ENCODE measurements at regions of chr20 and their contacts with region 1.

Region 1: GRCh38 chr20:63537525-63538203 is 488 bp upstream of the PTK6 start:
- DNase-seq: peak; percentile 88 to 94 (median 93)
- ATAC-seq: peak; percentile 86 to 90
- H3K4me3 ChIP-seq: no peak overlapping the region
- H3K27ac ChIP-seq: no peak overlapping the region
- H3K4me1 ChIP-seq: no peaks in the 10 kb centered on the region
- H3K27me3 ChIP-seq: no peaks in the 10 kb centered on the region

Region 2: GRCh38 chr20:63096151-63096589 is 441.5 kb before region 1 on chr20:
- intact Hi-C with region 1: no loop called
- DNase-seq: peak in 2 of 3 donors; percentile 4 to 12
- ATAC-seq: no peak
- H3K4me3 ChIP-seq: no peak overlapping the region
- H3K27ac ChIP-seq: no peak overlapping the region
- H3K4me1 ChIP-seq: no peaks in the 10 kb centered on the region
- H3K27me3 ChIP-seq: no peaks in the 10 kb centered on the region

Region 3: DNA sequence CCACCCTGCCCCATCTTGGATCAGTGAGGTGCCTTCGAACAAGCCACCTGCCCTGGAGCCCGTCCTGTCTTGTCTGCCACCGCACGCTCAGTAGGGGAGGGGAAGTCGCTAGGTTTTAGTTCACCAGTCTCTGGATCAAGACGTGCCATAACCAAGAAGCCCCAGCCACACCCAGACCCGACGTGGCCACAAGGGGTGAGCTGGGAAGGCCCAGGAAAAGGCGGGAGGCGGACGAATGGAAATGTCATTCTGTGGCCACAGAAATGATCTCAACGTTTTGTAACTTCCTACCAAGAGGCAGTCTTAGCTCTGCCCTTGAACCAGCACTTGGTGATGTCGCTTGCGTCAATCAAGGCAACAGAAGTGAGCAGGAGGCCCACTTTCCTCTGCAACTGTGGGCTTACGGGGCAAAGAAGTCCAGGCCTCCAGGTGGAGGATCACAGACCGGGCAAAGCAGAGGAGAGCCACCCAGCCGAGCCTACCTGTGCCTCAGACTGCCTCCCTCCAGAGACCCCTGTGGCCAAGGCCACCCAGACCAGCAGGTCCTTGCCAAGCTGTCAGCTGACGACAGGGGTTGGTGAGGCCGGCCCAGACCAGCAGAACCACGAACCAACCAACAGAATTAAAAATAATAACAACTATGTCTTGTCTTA is 74.7 kb after region 1 on chr20:
- intact Hi-C with region 1: loop called in 1 of 4 experiments (anchors 2 kb)
- DNase-seq: no peak
- ATAC-seq: peak; percentile 36 to 55
- H3K4me3 ChIP-seq: no peak overlapping the region
- H3K27ac ChIP-seq: no peak overlapping the region
- H3K4me1 ChIP-seq: no peaks in the 10 kb centered on the region
- H3K27me3 ChIP-seq: no peaks in the 10 kb centered on the region

Region 4: DNA sequence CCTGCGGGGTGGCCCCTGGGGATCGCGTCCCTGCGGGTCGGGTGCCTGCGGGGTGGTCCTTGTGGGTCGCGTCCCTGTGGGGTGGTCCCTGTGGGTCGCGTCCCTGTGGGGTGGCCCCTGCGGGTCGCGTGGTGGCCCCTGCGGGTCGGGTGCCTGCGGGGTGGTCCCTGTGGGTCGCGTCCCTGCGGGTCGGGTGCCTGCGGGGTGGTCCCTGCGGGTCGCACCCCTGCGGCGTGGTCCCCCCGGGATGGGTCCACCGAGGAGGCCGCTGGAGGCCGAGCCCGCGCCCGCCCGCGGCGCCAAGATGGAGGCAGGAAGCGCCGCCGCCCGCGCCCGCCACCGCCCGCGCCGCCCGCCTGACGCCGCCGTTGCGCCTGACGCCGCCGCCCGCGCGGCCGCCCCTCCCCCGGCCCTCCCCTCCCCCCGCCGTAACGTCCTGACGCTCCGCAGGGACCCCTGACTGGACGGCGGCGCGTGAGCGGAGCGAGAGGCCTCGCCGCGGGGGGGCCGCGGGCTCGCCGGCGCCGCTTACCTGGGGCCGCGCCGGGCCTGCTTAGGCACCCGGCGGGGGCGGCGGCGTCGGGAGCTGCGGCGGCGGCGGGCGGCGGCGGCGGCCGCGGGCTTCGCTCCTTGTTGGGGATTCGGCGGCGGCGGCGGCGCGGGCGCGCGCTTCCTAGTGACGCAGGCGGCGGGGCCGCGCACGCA is 88.9 kb after region 1 on chr20 and contains the start of gene GMEB2:
- intact Hi-C with region 1: no loop called
- DNase-seq: peak; percentile 80 to 93 (median 91)
- ATAC-seq: peak; percentile 24 to 44
- H3K4me3 ChIP-seq: peak within 1 kb of the TSS; percentile 49
- H3K27ac ChIP-seq: peak within 1 kb of the TSS; percentile 87
- H3K4me1 ChIP-seq: no peaks in the 10 kb centered on the region
- H3K27me3 ChIP-seq: no peaks in the 10 kb centered on the region
- total RNA-seq, gene GMEB2: 7.0 to 7.7 (median 7.3) TPM

Region 5: GRCh38 chr20:63750807-63751470 is 213.3 kb after region 1 on chr20:
- intact Hi-C with region 1: loop called in 1 of 4 experiments (anchors 10 kb)
- DNase-seq: peak in 1 of 3 donors; percentile 34
- ATAC-seq: no peak
- H3K4me3 ChIP-seq: no peak overlapping the region
- H3K27ac ChIP-seq: no peak overlapping the region
- H3K4me1 ChIP-seq: no peaks in the 10 kb centered on the region
- H3K27me3 ChIP-seq: no peaks in the 10 kb centered on the region

Region 6: DNA sequence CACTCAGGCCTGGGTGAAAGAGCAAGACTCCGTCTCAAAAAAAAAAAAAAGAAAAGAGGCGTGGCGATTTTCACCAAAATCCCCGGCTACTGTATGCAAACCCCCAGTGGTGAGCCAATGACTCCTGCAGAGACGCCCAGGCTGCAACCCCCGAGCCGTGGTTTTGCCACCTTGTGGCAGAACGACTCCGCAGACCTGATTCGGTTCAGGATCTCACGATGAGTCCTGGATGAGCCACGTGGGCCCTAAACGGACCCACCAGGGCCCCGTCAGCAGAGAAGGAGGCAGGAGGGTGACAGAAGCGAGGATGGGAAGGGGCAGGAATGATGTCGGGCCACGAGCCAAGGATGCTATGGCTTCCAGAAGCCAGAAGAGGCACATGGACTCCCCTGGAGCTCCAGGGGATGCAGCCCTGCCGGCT is 244.4 kb after region 1 on chr20:
- intact Hi-C with region 1: loop called in 1 of 4 experiments (anchors 10 kb)
- DNase-seq: peak in 1 of 3 donors; percentile 24
- ATAC-seq: no peak
- H3K4me3 ChIP-seq: no peak overlapping the region
- H3K27ac ChIP-seq: no peak overlapping the region
- H3K4me1 ChIP-seq: no peaks in the 10 kb centered on the region
- H3K27me3 ChIP-seq: no peaks in the 10 kb centered on the region